A549 (cell line): ENCODE measurements at regions of chr7 and their contacts with region 1.

Region 1: GRCh38 chr7:139431010-139431409 is 52.5 kb downstream of the KLRG2 start:
- DNase-seq: no peak
- ATAC-seq: no peak
- H3K4me3 ChIP-seq: no peak overlapping the region
- H3K27ac ChIP-seq: no peak overlapping the region
- H3K4me1 ChIP-seq: no peaks in the 10 kb centered on the region
- CTCF ChIP-seq: no peak
- EP300 ChIP-seq: no peak
- POLR2A ChIP-seq: no peak
- RAD21 ChIP-seq: no peak

Region 2: GRCh38 chr7:138726288-138726687 is 704.7 kb before region 1 on chr7:
- CTCF ChIA-PET with region 1: no interaction called
- POLR2A ChIA-PET with region 1: no interaction called
- DNase-seq: peak in 1 of 2 experiments; percentile 29
- ATAC-seq: peak; percentile 71 to 81; a peak in 4 of 6 replicates
- H3K4me3 ChIP-seq: no peak overlapping the region
- H3K27ac ChIP-seq: no peak overlapping the region
- H3K4me1 ChIP-seq: no peaks in the 10 kb centered on the region
- CTCF ChIP-seq: no peak; the same call in 2 of the 3 replicates
- EP300 ChIP-seq: no peak
- POLR2A ChIP-seq: no peak
- RAD21 ChIP-seq: 0 out of 5 replicates have a peak, but pooled peaks of 1 of the 2 experiments have one; percentile 5

Region 3: DNA sequence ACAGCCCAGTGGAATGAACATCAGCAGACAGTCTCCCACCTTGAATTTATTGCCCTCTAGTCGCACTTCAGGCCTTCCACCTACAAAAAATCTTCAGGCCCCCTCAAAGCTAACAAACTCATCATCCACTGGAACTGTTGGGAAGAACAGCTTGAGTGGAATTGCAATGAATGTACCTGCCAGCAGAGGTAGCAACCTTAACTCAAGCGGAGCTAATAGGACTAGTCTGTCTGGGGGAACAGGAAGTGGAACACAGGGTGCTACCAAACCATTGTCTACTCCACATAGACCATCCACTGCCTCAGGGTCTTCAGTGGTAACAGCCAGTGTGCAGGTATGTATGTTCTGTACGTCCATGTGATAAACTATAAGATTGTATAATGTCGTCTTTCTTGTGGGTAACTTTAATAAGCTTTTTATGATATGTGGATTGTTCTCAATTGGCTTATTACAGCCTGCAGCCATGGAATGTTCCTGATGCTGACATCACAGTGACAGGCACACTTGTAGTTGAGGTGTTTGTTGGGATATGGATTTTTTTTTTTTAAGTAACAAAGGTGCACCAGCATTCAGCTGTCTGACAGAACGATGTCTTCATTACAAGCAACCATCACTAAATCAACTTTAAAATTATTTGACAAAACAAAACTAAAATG is 146.6 kb before region 1 on chr7:
- CTCF ChIA-PET with region 1: no interaction called
- POLR2A ChIA-PET with region 1: no interaction called
- DNase-seq: peak in 1 of 2 experiments; percentile 11
- ATAC-seq: peak in 1 of 2 experiments; percentile 47; a peak in 2 of 6 replicates
- H3K4me3 ChIP-seq: no peak overlapping the region
- H3K27ac ChIP-seq: no peak overlapping the region
- H3K4me1 ChIP-seq: no peaks in the 10 kb centered on the region
- CTCF ChIP-seq: no peak
- EP300 ChIP-seq: no peak
- POLR2A ChIP-seq: no peak
- RAD21 ChIP-seq: no peak

Region 4: DNA sequence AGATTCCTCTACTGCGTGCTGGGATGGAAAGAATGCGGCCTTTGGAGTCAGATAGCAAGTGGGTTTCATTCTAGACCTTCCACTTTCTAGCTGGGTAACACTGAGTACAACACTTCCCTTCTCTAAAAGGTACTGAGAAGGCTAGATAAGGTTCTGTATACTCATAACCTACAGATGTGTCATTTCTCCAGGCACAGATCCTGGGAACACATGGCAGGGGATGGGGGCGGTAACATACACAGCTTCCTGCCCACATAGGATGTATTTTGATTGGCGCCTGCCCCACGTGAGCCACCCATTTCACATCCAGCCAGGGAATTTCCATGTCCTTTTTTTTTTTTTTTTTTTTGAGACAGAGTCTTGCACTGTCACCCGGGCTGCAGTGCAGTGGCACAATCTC is 20.6 kb after region 1 on chr7:
- CTCF ChIA-PET with region 1: interaction called, 68 read pairs
- POLR2A ChIA-PET with region 1: no interaction called
- DNase-seq: no peak
- ATAC-seq: peak; percentile 45 to 54; a peak in 4 of 6 replicates
- H3K4me3 ChIP-seq: no peak overlapping the region
- H3K27ac ChIP-seq: no peak overlapping the region
- H3K4me1 ChIP-seq: no peaks in the 10 kb centered on the region
- CTCF ChIP-seq: no peak
- EP300 ChIP-seq: no peak
- POLR2A ChIP-seq: no peak
- RAD21 ChIP-seq: no peak

Region 5: DNA sequence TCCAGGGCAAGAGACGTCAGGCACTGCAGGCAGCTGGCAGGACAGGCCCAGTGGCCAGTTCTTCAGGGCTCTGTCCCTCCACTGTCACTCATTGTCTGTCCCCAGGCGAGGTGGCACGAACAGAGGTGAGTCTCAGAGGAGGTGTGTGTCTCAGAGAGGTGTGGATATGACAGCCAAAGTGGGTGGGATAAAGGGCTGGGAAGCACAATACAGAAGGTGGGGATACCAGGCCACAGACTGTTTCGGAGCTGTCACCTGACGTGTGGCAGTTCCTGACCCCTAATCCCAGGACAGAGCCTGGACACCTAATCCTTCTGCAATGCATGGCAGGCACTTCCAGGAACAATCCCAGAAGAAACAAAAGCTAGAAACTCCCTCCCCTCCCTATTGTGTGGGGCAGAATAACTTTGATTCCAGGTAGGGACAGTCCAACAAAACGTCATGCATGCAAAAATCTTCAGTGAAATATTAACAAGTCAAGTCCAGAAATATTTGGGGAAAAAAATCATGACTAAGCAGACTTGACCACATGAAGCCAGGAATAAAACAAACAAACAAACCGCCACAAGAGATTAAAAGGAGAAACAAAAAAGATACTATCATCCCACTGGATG is 40.8 kb after region 1 on chr7:
- CTCF ChIA-PET with region 1: interaction called, 14 read pairs
- POLR2A ChIA-PET with region 1: no interaction called
- DNase-seq: peak; percentile 44 to 72
- ATAC-seq: peak; percentile 77 to 82
- H3K4me3 ChIP-seq: no peak overlapping the region
- H3K27ac ChIP-seq: peak overlapping the region; percentile 69 to 90
- H3K4me1 ChIP-seq: peaks cover 17% of the 10 kb centered on the region
- CTCF ChIP-seq: no peak
- EP300 ChIP-seq: no peak
- POLR2A ChIP-seq: no peak
- RAD21 ChIP-seq: no peak

Region 6: DNA sequence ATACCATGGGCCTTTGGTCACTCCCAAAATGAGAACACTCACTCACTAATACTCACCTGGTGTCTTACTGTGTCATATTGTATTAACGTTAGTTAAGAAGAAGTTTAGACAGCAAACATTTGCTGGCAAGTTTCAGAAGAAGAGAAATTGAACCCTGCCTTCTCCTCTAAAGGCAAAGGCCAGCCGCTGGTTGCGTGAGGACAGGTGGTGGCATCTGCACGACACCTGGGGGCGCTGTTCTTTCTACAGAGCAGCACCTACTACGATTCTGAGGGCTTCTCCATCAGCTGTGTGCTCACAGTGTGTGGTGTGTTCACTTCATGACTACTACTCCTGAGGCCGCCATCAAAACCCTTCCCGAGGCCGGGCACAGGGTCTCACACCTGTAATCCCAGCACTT is 74.6 kb after region 1 on chr7:
- CTCF ChIA-PET with region 1: interaction called, 21 read pairs
- POLR2A ChIA-PET with region 1: no interaction called
- DNase-seq: peak in 1 of 2 experiments; percentile 44
- ATAC-seq: peak; percentile 54 to 82; a peak in 4 of 6 replicates
- H3K4me3 ChIP-seq: no peak overlapping the region
- H3K27ac ChIP-seq: no peak overlapping the region
- H3K4me1 ChIP-seq: no peaks in the 10 kb centered on the region
- CTCF ChIP-seq: peak; percentile 23; the same call in 2 of the 3 replicates
- EP300 ChIP-seq: no peak
- POLR2A ChIP-seq: no peak
- RAD21 ChIP-seq: 0 out of 5 replicates have a peak, but pooled peaks of 1 of the 2 experiments have one; percentile 11

Region 7: GRCh38 chr7:139541600-139542307 is 110.7 kb after region 1 on chr7:
- CTCF ChIA-PET with region 1: no interaction called
- POLR2A ChIA-PET with region 1: no interaction called
- DNase-seq: no peak
- ATAC-seq: peak in 1 of 2 experiments; percentile 12; a peak in 3 of 6 replicates
- H3K4me3 ChIP-seq: no peak overlapping the region
- H3K27ac ChIP-seq: no peak overlapping the region
- H3K4me1 ChIP-seq: no peaks in the 10 kb centered on the region
- CTCF ChIP-seq: no peak
- EP300 ChIP-seq: no peak
- POLR2A ChIP-seq: no peak
- RAD21 ChIP-seq: no peak